Psoas muscle (tissue), 8 donors: ENCODE measurements at regions of chr3 and their contacts with region 1.

Region 1: DNA sequence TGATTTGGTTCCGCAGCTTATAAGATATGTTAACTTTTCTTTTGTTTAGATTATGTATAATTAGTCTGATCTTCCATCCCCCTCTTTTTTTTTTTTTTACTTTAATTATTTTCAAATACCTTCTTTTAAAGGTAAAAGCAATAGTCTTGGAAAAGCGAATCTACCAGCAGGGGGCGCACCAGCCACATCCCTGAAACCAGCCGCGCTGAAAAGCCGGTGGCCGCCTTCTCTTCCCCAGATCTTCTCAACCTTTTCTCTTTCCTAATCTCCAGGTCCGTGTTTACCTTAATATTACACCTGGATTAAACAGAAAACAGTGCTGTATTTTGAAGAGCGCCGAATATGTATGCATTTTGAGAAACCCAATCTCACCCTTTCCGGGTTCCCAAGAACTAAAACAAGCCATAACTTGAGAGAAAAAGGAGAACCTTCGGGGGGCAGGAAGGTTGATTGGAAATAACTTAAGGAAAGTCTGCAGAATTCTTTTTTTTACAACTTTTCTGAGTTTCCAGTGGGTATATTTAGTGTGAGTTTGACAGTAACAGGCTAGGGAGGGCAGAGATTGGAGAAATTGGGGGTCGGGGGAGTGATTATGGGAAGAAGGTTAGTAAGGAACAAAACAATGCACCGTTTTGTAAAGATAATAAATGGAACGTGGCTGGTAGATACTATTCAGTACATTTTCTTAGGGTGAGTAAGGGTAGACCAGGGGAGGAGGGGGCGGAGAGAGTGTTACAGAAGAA is 2.0 kb upstream of the SOX2 start:
- DNase-seq: peak; percentile 57 to 80
- ATAC-seq: peak in 2 of 4 donors; percentile 43 to 73
- H3K4me3 ChIP-seq: no peak overlapping the region
- H3K27ac ChIP-seq: no peak overlapping the region
- H3K4me1 ChIP-seq: no peaks in the 10 kb centered on the region
- H3K27me3 ChIP-seq: peaks cover 16 to 99% (median 25%) of the 10 kb centered on the region in 3 donors
- CTCF ChIP-seq: peak; percentile 87

Region 2: DNA sequence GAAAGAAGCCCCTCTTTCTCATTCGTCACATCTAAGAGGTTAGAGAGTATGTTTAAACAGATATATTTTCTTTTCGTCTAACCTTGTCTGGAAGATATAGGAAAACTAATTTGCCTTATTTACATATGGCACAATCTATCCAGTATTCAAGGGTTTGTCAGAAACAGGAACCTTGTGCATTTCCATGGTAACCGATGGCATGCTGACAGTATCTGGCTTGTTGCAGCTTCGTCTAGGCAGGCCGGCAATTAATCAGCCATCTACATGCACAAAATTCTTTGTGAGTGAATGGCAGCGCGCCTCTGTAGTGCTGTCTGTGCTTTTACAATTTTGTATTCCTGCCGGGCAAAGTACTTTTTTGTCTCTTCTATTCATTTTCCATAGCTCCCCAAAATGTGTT is 292.0 kb before region 1 on chr3:
- intact Hi-C with region 1: no loop called
- DNase-seq: no peak
- ATAC-seq: no peak
- H3K4me3 ChIP-seq: no peak overlapping the region
- H3K27ac ChIP-seq: no peak overlapping the region
- H3K4me1 ChIP-seq: no peaks in the 10 kb centered on the region
- H3K27me3 ChIP-seq: no peaks in the 10 kb centered on the region
- CTCF ChIP-seq: no peak

Region 3: GRCh38 chr3:182258538-182259177 is 549.0 kb after region 1 on chr3:
- intact Hi-C with region 1: loop called (anchors 2 to 5 kb)
- DNase-seq: no peak
- ATAC-seq: peak in 1 of 4 donors; percentile 52
- H3K4me3 ChIP-seq: no peak overlapping the region
- H3K27ac ChIP-seq: no peak overlapping the region
- H3K4me1 ChIP-seq: no peaks in the 10 kb centered on the region
- H3K27me3 ChIP-seq: peaks cover 0 to 7% (median 0%) of the 10 kb centered on the region in 3 donors
- CTCF ChIP-seq: peak; percentile 41

Region 4: GRCh38 chr3:182683453-182683852 is 973.7 kb after region 1 on chr3:
- intact Hi-C with region 1: loop called (anchors 2 kb)
- DNase-seq: peak in 1 of 2 donors; percentile 24
- ATAC-seq: peak; percentile 74 to 94 (median 88)
- H3K4me3 ChIP-seq: peak overlapping the region; percentile 70
- H3K27ac ChIP-seq: no peak overlapping the region
- H3K4me1 ChIP-seq: peaks cover 3% of the 10 kb centered on the region
- H3K27me3 ChIP-seq: peaks cover 0 to 7% (median 0%) of the 10 kb centered on the region in 3 donors
- CTCF ChIP-seq: peak; percentile 90